ENCODE measurements at regions of chr11 and their contacts with region 1.

Region 1: DNA sequence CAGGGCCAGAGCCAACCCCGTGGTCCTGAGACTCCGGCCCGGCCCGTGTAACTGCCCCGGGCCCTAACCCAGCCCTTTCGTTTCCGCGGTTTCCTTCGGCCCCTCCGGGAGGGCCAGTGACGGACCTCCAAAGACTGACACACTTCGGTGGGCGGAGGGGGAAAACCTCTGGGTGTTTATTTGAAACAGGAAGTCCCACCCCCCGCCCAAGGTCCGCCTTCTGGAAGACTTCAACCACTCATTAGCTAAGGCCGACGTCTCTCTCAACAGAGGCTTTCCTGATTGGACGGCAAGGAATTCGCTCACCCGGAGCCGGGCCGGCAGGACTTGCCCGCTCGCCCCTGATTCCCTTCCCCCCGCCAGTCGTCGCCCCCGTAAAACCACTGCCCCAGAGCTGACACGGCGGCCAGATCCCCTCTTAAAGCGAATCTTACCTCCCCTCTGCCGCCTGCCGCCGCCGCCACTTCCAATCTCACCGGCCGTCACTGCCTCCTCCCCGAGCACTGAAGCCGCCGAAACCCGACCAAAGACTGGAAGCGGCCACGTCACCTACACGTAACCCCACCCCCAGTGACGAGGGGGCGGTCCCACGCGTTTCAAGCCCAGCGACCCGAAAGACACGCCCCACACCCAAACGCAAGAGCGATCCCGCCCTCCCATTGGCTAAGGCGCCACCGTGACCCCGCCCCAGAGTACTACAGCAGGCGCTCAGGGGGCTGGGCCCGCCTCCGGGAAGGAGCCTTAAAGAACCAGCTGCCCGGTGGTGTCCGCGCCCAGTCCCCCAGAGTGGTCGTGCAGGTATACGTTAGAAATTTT is at the start of gene STX5:
- DNase-seq: peak; percentile 98 to 99
- ATAC-seq: peak; percentile 89 to 94
- H3K4me3 ChIP-seq: peak within 1 kb of the TSS; percentile 85
- H3K27ac ChIP-seq: peak within 1 kb of the TSS; percentile 91 to 94
- H3K4me1 ChIP-seq: peaks cover 18% of the 10 kb centered on the region
- CTCF ChIP-seq: no peak
- EP300 ChIP-seq: no peak
- POLR2A ChIP-seq: peak; percentile 37
- RAD21 ChIP-seq: no peak
- polyA plus RNA-seq, gene STX5: 30.3 and 32.3 TPM in 2 replicates

Region 2: GRCh38 chr11:62805076-62805892 is 26.4 kb before region 1 on chr11 and contains the start of gene NXF1:
- CTCF ChIA-PET with region 1: interaction called, 8 read pairs
- POLR2A ChIA-PET with region 1: interaction called, 11 read pairs
- DNase-seq: peak; percentile 84 to 97
- ATAC-seq: peak; percentile 83 to 91
- H3K4me3 ChIP-seq: peak within 1 kb of the TSS; percentile 90
- H3K27ac ChIP-seq: peak within 1 kb of the TSS; percentile 87 to 92
- H3K4me1 ChIP-seq: peaks cover 16% of the 10 kb centered on the region; the same call in 2 of the 3 replicates
- CTCF ChIP-seq: no peak
- EP300 ChIP-seq: no peak
- POLR2A ChIP-seq: peak; percentile 100
- RAD21 ChIP-seq: no peak; a peak in 1 of 5 replicates
- polyA plus RNA-seq, gene NXF1: 35.5 and 50.7 TPM in 2 replicates

Region 3: DNA sequence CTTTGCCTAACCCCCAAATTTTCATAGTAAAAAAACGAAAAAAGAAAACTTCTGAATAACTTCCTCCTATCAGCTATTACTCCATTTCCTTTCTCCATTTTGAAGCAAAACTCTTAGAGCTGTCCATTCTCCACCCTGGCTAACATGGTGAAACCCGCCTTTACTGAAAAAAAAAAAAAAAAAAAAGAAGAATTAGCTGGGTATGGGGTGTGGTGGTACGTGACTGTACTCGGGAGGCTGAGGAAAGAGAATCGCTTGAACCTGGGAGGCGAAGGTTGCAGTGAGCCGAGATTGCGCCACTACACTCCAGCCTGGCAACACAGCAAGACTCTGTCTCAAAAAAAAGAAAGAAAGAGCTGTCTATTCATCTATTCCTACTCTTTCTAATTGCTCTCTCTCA is 15.2 kb before region 1 on chr11:
- CTCF ChIA-PET with region 1: interaction called, 17 read pairs
- POLR2A ChIA-PET with region 1: interaction called, 9 read pairs
- DNase-seq: no peak
- ATAC-seq: no peak
- H3K4me3 ChIP-seq: no peak overlapping the region
- H3K27ac ChIP-seq: no peak overlapping the region
- H3K4me1 ChIP-seq: no peaks in the 10 kb centered on the region
- CTCF ChIP-seq: no peak
- EP300 ChIP-seq: no peak
- POLR2A ChIP-seq: no peak
- RAD21 ChIP-seq: no peak

Region 4: DNA sequence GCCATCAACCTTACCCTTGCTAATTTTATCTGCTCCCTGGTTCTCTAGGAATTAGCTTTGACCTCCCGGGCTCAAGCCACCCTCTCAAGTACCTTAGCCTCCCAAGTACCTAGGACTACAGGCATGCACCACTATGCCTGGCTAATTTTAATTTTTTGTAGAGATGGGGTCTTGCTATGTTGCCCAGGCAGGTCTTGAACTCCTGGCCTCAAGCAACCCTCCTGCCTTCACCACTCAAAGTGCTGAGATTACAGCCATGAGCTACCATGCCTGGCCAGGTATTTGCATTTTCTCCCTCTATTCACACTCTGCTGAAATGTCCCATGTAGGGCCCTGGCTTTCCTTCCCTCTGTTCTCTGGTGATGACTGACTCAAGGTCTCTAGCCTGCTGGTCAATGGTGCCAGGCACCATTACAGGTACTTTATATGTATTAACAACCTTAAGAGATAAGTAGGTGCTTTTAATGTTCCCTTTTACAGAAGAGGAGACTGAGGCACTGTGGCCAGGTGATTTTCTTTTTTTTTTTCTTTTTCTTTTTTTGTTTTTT is 16.1 kb after region 1 on chr11:
- CTCF ChIA-PET with region 1: no interaction called
- POLR2A ChIA-PET with region 1: no interaction called
- DNase-seq: no peak
- ATAC-seq: no peak
- H3K4me3 ChIP-seq: no peak overlapping the region
- H3K27ac ChIP-seq: no peak overlapping the region
- H3K4me1 ChIP-seq: peaks cover 19% of the 10 kb centered on the region
- CTCF ChIP-seq: no peak
- EP300 ChIP-seq: no peak
- POLR2A ChIP-seq: no peak
- RAD21 ChIP-seq: no peak